ENCODE measurements at regions of chr17 and their contacts with region 1.

Region 1: DNA sequence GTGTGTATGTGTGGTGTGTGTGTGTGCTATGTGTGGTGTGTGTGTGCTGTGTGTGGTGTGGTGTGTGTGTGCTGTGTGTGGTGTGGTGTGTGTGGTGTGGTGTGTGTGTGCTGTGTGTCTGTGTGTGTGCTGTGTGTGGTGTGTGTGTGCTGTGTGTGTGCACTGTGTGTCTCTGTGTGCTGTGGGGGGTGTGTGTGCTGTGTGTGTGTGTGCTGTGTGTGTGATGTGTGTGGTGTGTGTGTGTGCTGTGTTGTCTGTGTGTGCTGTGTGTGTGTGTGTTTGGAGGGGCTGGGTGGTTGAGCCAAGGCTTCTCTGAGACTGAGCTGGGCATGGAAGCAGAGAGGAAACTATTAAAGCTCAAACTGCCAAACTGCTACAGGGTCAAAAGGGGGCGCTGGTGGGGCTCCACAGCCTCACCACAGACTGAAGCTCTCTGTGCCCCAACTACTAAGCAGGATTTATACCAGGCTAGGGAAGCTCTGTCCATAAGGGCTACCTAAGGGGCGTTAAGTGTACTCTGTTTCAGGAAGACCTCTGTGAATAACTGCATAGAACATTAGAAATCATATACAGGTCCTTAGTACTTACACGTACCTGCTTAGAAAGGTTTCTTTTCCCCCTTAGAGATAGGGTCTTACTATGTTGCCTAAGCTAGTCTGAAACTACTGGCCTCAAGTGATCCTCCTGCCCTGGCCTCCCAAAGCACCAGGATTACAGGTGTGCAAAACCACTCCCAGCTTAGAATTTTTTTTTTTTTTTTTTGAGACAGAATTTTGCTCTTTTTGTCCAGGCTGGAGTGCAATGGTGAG is 27.8 kb upstream of the GHDC start:
- DNase-seq: peak; percentile 72
- CTCF ChIP-seq: peak; percentile 73

Region 2: DNA sequence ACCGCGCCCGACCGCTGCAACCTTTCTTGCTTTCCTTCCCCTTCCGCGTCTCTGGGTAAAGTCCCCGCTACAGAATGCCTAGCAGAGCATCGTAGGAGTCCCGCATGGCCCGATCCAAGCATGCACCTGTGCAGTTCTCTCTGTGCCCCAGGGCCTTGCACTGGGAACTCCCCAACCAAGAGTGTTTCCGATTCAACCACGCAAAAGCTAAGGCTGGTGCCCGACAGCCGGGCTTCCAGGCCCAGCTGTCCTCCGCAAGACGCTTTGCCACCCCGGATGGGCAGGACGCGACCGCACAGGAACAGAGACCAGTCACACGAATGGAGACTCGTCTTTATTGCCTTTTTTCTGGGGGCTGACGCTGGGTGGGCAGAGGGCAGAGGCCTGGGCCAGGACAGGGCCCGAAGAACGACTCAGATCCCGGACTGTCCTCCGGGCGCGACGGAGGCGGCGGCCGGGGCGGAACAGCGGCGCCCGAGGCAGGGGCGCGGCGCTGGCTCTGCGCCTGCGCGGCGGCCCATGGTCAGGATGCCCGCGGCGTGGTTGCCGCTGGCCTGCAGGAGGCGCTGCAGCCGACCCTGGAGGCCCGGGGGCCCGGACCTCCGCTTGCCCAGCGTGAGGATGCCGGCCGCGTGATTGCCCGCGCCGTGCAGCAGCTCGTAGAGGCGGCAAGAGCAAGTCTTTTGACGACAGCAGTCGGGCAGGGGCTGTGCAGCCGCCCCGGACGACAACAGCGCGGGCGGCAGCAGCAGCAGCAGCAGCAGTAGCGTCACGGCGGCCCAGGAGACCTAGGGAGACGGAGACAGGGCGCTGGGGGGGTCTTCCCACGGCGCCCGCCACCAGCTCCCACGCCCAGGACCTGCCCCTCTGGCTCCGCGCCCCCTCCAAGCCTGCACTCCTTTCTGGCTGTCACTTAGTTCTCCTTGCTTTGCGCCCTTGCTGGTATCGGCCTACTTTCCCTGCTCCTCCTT is 38.1 kb before region 1 on chr17:
- CTCF ChIA-PET with region 1: interaction called, 13 read pairs
- POLR2A ChIA-PET with region 1: no interaction called
- DNase-seq: peak; percentile 95
- CTCF ChIP-seq: peak; percentile 90

Region 3: GRCh38 chr17:42240212-42240884 is 18.2 kb after region 1 on chr17:
- CTCF ChIA-PET with region 1: interaction called, 15 read pairs
- POLR2A ChIA-PET with region 1: no interaction called
- DNase-seq: no peak
- CTCF ChIP-seq: no peak

Region 4: DNA sequence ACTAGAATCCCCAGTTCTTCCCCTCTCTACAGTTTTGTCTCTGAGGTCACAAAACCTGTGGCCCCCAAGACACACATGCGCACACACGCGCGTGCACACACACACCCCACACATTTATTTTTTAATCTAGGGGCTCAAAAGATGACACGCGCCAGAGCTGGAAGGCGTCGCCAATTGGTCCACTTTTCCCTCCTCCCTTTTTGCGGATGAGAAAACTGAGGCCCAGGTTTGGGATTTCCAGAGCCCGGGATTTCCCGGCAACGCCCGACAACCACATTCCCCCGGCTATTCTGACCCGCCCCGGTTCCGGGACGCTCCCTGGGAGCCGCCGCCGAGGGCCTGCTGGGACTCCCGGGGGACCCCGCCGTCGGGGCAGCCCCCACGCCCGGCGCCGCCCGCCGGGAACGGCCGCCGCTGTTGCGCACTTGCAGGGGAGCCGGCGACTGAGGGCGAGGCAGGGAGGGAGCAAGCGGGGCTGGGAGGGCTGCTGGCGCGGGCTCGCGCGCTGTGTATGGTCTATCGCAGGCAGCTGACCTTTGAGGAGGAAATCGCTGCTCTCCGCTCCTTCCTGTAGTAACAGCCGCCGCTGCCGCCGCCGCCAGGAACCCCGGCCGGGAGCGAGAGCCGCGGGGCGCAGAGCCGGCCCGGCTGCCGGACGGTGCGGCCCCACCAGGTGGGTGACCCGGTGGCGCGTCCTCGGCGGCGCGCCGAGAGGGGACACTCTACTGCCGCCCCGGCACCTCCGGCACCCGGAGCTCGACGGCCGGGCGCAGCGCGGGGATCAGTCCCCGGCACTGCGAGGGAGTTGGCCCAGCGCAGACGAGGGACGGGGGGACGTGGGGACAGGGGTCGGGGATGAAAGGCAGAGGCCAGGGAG is 66.0 kb after region 1 on chr17 and contains the start of gene STAT5A:
- CTCF ChIA-PET with region 1: interaction called, 13 read pairs
- POLR2A ChIA-PET with region 1: no interaction called
- DNase-seq: peak; percentile 86
- CTCF ChIP-seq: no peak

Region 5: GRCh38 chr17:42405963-42406495 is 183.9 kb after region 1 on chr17:
- CTCF ChIA-PET with region 1: interaction called, 18 read pairs
- POLR2A ChIA-PET with region 1: no interaction called
- DNase-seq: peak; percentile 82
- CTCF ChIP-seq: peak; percentile 95